AG04449 (cell line): ENCODE measurements at regions of chr1 and their contacts with region 1.

Region 1: DNA sequence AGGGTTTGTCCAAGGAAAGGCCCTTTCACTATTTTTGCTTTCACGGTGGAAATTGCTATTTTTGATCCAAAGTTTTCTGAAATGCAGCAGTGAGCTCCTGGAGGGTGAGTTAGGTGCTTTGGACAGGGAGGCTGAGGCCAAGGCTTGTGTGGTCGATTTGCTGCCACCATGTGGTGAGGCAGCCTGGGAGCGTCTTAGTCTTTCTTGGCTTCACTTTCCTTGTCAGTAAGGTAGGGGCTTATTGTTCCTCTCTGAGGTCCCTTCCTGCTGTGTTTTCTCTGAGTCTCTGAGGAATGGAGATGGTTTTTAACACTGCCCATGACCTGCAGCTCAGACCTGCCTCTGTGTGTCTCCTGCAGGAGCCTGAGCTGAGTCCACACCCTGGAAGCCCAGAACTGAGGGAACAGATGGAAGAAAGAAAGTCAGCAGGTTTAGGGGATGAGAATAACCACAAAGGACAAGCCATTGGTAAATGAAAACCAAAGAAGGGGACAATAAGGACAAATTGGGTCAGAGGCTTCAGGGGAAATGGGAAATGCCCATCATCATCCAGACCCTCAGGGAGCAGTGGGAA is 20.1 kb upstream of the S100A10 start:
- DNase-seq: no peak
- H3K4me3 ChIP-seq: no peak overlapping the region
- CTCF ChIP-seq: peak; percentile 76

Region 2: GRCh38 chr1:151934048-151934493 is 79.7 kb before region 1 on chr1:
- CTCF ChIA-PET with region 1: interaction called, 605 read pairs
- POLR2A ChIA-PET with region 1: no interaction called
- DNase-seq: no peak
- H3K4me3 ChIP-seq: no peak overlapping the region
- CTCF ChIP-seq: peak; percentile 75

Region 3: DNA sequence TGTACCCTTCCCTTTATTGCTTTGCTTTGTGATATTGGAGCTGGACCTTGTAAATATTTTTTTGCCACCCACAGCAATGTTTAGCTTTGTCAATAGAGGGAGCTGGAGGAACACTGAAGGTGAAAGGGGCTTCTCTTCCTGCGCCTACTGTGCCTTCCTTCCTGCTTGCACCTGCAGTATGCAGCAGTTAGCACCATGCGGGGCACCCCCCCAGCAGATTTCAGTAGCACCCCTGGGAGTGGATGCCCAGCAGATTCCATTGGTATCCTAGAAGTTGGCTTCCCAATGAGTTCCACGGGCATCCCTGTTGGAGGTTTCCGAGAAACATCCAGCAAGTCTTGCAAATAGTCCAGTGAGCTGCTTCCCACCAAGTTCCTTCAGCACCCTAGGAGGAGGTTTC is 45.7 kb before region 1 on chr1:
- CTCF ChIA-PET with region 1: interaction called, 95 read pairs
- POLR2A ChIA-PET with region 1: no interaction called
- DNase-seq: no peak
- H3K4me3 ChIP-seq: no peak overlapping the region
- CTCF ChIP-seq: peak; percentile 66

Region 4: GRCh38 chr1:152024158-152024557 is 10.4 kb after region 1 on chr1:
- CTCF ChIA-PET with region 1: interaction called, 30 read pairs
- POLR2A ChIA-PET with region 1: no interaction called
- DNase-seq: no peak
- H3K4me3 ChIP-seq: no peak overlapping the region
- CTCF ChIP-seq: no peak

Region 5: DNA sequence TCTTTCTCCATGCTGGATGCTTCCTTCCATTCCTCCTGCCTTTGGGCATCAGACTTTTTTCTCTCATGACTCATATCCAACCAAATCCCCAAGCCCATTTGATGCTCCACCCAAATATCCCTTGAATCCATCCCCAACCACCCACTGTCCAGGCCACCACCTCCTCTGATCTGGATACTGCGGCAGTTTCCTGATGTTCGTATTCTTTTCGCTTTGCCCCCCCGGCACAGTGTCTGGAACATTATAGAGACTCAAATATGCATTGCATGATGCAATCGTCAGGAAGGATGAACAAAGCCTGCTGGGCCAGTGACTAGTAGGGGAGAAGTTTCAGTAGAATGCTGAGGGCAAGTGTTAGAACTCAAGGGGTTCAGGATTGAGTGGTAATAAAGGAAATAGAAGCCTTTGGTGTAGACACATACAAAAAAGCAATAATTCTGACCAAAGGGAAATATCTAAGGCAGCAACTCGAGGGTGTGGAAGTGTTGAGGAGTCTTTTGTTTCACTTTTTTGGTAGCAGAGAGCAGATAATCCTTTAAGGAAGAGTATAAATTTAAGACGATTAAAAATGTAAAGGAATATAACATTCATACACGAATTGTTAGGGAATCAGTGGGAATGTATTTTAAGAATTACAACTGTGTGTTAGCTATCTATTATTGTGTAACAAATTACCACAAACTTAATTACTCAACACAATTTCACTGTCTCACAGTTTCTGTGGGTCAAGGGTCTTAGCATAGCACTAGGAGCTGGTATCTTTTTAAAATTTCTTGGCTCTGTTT is 15.6 kb after region 1 on chr1:
- CTCF ChIA-PET with region 1: interaction called, 39 read pairs
- POLR2A ChIA-PET with region 1: no interaction called
- DNase-seq: no peak
- H3K4me3 ChIP-seq: no peak overlapping the region
- CTCF ChIP-seq: no peak

Region 6: GRCh38 chr1:152034646-152035405 is 21.1 kb after region 1 on chr1:
- CTCF ChIA-PET with region 1: interaction called, 39 read pairs
- POLR2A ChIA-PET with region 1: no interaction called
- DNase-seq: no peak
- H3K4me3 ChIP-seq: peak overlapping the region; percentile 82
- CTCF ChIP-seq: peak; percentile 58